ENCODE measurements at regions of chr1 and their contacts with region 1.

Region 1: DNA sequence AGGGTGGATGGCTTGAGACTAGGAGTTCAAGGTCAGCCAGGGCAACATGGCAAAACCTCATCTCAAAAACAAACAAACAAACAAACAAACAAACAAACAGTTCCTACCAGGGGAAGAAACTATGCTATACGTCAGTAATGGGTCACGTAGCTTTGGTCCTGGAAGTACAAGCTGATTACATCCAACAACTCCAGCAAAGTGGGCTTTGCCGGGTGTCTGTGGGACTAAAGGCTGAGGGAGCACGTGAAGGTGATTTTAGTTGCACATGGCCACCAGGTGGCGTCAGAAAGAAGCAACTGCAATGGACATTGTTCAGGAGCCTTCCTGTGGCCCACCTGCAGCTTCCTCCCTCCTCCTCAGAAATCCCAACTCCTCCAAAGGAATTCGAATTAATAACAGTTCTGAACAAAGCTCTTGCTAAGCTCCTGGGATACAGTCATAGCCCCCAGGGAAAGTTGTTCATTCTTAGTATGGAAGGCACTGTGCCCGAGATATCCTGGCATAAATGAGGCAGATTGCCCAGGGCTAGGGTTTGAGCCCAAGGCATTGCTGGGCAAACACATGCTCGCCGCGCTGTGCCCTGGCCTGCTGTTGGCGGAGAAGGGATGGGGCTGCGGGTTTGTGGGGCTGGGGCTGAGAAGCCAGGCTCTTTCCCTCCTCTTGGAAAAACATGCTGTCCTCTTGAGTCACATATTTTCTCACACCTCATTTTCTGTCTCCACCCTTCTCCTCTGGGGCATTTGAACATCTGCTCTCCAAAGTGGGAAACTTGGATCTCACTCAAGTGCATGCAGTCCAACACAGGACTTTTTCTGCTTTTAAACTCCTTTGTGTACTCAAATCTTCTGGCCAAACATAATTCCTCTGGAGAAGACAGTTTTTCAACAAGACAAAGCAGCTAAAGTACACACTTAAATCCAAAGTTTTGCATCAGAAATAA is 28.6 kb downstream of the AKNAD1 start:
- DNase-seq: peak; percentile 75 to 89 (median 84)
- ATAC-seq: peak; percentile 81 to 91
- H3K4me3 ChIP-seq: no peak overlapping the region
- H3K27ac ChIP-seq: peak overlapping the region; percentile 49
- H3K4me1 ChIP-seq: peaks cover 11% of the 10 kb centered on the region
- H3K27me3 ChIP-seq: no peaks in the 10 kb centered on the region

Region 2: DNA sequence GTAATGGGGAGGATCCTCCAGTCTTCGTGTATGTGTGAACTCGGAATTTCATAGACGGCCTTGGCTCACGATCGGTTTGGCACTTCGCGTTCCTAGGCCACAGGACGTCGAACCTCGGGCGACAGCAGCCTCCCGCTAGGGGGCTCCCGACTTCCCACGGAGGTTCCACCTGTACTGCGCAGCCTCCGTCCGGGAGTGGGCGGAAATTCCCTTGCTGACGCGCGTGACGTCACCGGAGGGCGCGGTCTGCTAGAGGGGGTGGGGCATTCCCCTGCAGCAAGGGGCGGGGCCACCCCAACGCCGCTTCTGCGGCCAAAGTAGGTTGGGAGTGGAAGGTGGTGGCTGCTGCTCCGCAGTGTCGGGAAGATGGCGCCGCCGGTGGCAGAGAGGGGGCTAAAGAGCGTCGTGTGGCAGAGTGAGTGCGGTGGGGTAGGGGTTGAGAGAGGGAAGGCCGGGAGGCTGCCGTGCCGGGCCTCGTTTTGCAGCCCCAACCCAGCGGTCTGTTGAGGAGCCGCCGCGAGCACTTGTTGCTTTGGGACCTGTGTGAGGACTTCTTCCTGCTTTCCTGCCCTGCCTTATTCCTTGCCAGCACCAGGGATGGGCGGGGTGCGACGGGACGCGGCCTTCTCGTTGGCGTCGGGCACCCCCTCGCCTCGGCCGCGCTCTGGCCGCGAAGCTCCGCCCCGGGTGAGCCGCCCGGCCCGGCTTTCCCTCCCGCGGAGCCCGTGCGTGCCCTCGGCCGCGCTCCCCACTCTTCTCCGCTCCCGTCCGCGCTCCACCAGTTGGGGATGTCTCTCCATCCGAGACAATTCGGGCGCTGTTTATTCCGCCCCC is 81.7 kb before region 1 on chr1 and contains the start of gene STXBP3:
- intact Hi-C with region 1: no loop called
- DNase-seq: peak; percentile 99 to 100 (median 100)
- ATAC-seq: peak; percentile 96 to 97
- H3K4me3 ChIP-seq: peak within 1 kb of the TSS; percentile 75
- H3K27ac ChIP-seq: peak within 1 kb of the TSS; percentile 96
- H3K4me1 ChIP-seq: no peaks in the 10 kb centered on the region
- H3K27me3 ChIP-seq: no peaks in the 10 kb centered on the region
- total RNA-seq, gene STXBP3: 25.5 to 32.4 (median 29.3) TPM

Region 3: GRCh38 chr1:108877348-108878159 is 49.3 kb after region 1 on chr1:
- intact Hi-C with region 1: loop called in 2 of 4 experiments (anchors 5 kb)
- DNase-seq: no peak
- ATAC-seq: peak in 1 of 2 donors; percentile 4
- H3K4me3 ChIP-seq: peak overlapping the region; percentile 84
- H3K27ac ChIP-seq: no peak overlapping the region
- H3K4me1 ChIP-seq: no peaks in the 10 kb centered on the region
- H3K27me3 ChIP-seq: no peaks in the 10 kb centered on the region

Region 4: DNA sequence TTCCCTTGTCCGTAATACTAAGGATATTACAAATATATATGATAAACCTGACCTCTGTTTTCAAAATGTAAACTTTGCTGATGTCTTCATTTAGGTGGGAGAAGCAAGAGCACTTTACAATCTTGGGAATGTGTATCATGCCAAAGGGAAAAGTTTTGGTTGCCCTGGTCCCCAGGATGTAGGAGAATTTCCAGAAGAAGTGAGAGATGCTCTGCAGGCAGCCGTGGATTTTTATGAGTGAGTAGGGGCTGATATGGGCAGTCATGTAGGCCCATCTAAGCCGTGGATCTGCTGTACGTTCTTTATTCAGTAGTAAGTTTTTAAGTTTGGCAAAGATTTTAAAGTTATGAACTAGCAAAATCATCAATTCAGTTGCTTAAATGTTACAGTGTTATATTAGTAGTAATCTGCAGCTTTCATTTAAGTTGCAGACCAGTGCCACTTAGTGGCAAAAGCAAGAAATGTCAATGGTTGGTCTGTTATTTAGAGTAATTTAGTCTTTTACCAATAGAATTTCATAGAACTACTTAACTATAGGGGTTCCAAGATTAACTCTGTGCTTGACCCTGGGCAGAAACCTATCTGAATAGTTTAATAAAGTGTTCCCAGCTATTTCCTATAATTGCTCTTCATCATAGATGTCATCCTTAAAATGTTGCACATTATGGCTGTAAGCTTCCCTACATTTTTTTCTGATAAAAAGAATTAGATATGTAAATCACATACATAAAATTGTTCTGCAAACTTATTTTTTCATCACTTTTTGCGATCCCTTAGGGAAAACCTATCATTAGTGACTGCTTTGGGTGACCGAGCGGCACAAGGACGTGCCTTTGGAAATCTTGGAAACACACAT is 69.8 kb after region 1 on chr1:
- intact Hi-C with region 1: loop called (anchors 2 to 5 kb)
- DNase-seq: no peak
- ATAC-seq: peak; percentile 64 to 69
- H3K4me3 ChIP-seq: no peak overlapping the region
- H3K27ac ChIP-seq: no peak overlapping the region
- H3K4me1 ChIP-seq: no peaks in the 10 kb centered on the region
- H3K27me3 ChIP-seq: no peaks in the 10 kb centered on the region

Region 5: DNA sequence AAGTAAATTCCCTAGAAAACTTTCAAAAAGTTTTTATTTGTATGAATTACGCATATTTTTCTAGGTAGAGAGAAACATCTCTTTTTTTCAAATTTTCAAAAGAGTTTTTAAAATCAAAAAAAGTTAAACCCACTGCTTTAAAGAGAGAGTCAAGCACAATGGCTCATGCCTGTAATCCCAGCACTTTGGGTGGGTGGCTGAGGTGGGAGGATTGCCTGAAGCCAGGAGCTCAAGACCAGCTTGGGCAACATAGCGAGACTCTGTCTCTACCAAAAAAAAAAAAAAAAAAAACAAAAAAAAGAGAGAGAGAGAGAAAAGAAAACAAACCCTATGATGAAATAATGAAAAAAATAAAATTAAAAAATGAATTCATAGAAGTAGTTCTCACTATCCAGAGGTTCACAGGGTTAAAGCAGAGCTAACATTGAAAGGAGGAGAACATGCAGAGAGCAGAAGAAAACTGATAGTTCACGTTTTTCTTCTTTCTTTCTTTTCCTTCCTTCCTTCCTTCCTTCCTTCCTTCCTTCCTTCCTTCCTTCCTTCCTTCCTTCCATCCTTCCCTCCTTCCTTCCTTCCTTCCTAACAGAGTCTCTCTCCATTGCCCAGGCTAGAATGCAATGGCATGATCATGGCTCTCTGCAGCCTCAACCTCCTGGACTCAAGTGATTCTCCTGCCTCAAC is 354.9 kb after region 1 on chr1:
- intact Hi-C with region 1: no loop called
- DNase-seq: no peak
- ATAC-seq: no peak
- H3K4me3 ChIP-seq: no peak overlapping the region
- H3K27ac ChIP-seq: no peak overlapping the region
- H3K4me1 ChIP-seq: no peaks in the 10 kb centered on the region
- H3K27me3 ChIP-seq: no peaks in the 10 kb centered on the region

Region 6: DNA sequence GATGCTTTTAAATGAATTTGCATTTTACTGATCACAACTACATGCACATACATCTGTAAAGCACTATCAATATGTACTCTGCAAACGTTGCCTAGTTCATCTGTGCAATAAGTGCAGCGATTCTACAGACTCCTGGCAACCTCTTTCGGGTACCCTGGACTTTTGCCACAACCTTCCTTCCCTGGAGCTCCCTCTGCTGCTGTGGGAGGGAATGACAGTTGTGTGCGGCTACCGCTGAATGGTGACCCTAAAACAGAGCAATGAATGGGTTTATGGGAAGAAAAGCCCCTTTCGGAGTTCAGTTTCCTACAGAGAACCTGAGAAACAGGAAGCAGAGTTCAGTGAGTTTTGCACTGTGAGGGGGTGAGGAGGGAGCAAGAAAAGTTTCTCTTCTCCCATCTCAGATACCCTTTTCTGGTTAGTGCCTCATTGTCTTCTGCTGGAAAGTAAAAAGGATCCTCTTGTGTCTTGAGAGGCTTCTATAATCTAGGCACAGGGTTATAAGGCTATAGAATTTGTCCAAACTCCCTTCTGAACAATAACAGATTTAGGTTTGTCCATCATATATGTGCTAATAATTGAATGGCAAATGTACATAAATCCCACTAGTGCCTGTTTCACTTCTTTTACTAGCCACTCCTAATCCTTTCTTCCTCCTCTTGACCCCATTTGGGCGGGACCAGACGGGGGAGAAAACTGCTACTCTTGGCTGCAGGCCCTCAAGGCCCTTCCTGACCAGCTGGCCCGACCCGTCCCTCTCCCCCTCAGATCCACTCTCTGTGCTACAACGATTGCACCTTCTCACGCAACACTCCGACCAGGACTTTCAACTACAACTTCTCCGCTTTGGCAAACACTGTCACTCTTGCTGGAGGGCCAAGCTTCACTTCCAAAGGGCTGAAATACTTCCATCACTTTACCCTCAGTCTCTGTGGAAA is 365.6 kb after region 1 on chr1:
- intact Hi-C with region 1: no loop called
- DNase-seq: no peak
- ATAC-seq: no peak
- H3K4me3 ChIP-seq: no peak overlapping the region
- H3K27ac ChIP-seq: no peak overlapping the region
- H3K4me1 ChIP-seq: peaks cover 5% of the 10 kb centered on the region
- H3K27me3 ChIP-seq: no peaks in the 10 kb centered on the region

Measured in right cardiac atrium (tissue), 5 donors.